ENCODE measurements at regions of chrX and their contacts with region 1.

Region 1: DNA sequence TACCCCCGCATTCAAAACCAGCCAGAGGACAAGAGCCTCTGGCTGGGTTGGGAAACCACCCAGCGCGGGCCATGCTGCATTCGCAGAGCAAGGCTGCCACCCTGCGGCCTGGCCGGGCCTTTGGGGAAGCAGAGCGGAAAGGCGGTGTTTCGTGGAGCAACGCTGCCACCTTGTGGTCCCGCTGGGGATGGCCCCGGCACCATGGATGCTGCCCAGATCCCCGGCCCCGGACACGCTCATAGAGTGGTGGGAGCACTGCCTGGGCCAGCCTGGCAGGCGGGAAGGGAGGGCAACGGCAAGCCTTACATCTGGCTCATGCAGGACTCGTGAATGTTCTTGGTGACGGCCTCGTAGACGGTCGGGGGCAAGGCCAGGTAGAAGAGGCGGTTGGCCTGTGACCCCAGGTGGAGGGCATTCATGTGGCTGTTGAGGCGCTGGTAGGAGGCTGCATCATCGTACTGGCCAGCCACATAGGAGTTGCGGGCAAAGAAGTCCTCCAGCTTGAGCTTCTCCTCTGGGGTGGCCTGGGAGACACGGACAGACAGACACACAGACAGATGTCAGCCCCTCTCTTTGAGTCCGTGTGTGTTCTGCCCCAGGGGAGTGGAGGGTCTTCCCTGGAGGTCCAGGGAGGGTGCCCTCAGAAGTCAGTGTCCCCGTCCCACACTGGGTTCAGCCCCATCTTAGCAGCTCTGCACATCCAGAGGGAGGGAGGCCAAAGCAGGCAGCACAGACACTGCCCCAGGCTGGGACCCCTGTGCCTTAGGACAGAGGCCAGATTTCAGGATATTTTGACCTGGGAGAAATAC is 11.6 kb downstream of the G6PD start:
- DNase-seq: peak; percentile 78 to 93 (median 87)
- ATAC-seq: peak; percentile 100
- H3K4me3 ChIP-seq: no peak overlapping the region
- H3K4me3 Mint-ChIP-seq: no peak overlapping the region
- H3K27ac ChIP-seq: peak overlapping the region; percentile 55
- H3K27ac Mint-ChIP-seq: peak overlapping the region in 5 of 9 donors; percentile 26 to 72 (median 67)
- H3K4me1 ChIP-seq: no peaks in the 10 kb centered on the region
- H3K4me1 Mint-ChIP-seq: peaks cover 0 to 13% (median 6%) of the 10 kb centered on the region in 7 donors
- H3K27me3 ChIP-seq: no peaks in the 10 kb centered on the region
- H3K27me3 Mint-ChIP-seq: no peaks in the 10 kb centered on the region

Region 2: GRCh38 chrX:154013614-154014360 is 521.3 kb before region 1 on chrX:
- CTCF ChIA-PET with region 1: no interaction called
- POLR2A ChIA-PET with region 1: no interaction called
- intact Hi-C with region 1: loop called in 1 of 2 experiments (anchors 2 kb)
- DNase-seq: peak; percentile 24 to 66 (median 47)
- ATAC-seq: peak; percentile 83
- H3K4me3 ChIP-seq: no peak overlapping the region
- H3K4me3 Mint-ChIP-seq: no peak overlapping the region
- H3K27ac ChIP-seq: no peak overlapping the region
- H3K27ac Mint-ChIP-seq: peak overlapping the region in 4 of 9 donors; percentile 12 to 84 (median 68)
- H3K4me1 ChIP-seq: no peaks in the 10 kb centered on the region
- H3K4me1 Mint-ChIP-seq: peaks cover 0 to 17% (median 8%) of the 10 kb centered on the region in 7 donors
- H3K27me3 ChIP-seq: no peaks in the 10 kb centered on the region
- H3K27me3 Mint-ChIP-seq: no peaks in the 10 kb centered on the region

Region 3: GRCh38 chrX:154317391-154317995 is 217.6 kb before region 1 on chrX:
- CTCF ChIA-PET with region 1: interaction called, 4 read pairs
- POLR2A ChIA-PET with region 1: no interaction called
- intact Hi-C with region 1: loop called in 1 of 2 experiments (anchors 1 kb)
- DNase-seq: peak in 3 of 9 donors; percentile 37 to 39 (median 37)
- ATAC-seq: peak; percentile 37
- H3K4me3 ChIP-seq: no peak overlapping the region
- H3K4me3 Mint-ChIP-seq: peak overlapping the region in 8 of 10 donors; percentile 19 to 57 (median 48)
- H3K27ac ChIP-seq: no peak overlapping the region
- H3K27ac Mint-ChIP-seq: peak overlapping the region in 2 of 9 donors; percentile 64 to 91
- H3K4me1 ChIP-seq: peaks cover 13 to 17% of the 10 kb centered on the region in 2 donors
- H3K4me1 Mint-ChIP-seq: peaks cover 14 to 41% (median 39%) of the 10 kb centered on the region in 7 donors
- H3K27me3 ChIP-seq: no peaks in the 10 kb centered on the region
- H3K27me3 Mint-ChIP-seq: no peaks in the 10 kb centered on the region

Region 4: DNA sequence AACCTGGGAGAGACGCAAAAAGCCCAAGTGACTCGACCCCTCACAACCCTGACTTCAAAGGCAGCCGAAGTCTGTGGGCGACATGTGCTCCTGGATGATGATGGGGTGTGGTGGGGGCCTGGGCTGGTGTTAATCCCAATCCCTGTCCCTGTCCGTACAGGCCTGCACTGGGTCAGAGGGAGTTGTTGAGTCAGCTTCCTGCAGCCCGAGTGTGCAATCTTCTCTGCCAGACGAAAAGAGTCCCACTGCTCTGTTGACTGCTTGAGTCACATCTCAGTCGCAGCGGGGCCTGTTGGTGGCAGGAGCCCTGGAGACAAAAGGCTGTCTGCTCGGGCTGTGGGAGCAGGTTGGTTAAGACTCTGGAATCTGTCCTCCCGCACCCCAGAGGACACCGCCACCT is 29.3 kb before region 1 on chrX:
- CTCF ChIA-PET with region 1: no interaction called
- POLR2A ChIA-PET with region 1: no interaction called
- intact Hi-C with region 1: no loop called
- DNase-seq: no peak
- ATAC-seq: no peak
- H3K4me3 ChIP-seq: no peak overlapping the region
- H3K4me3 Mint-ChIP-seq: no peak overlapping the region
- H3K27ac ChIP-seq: no peak overlapping the region
- H3K27ac Mint-ChIP-seq: no peak overlapping the region
- H3K4me1 ChIP-seq: no peaks in the 10 kb centered on the region
- H3K4me1 Mint-ChIP-seq: peaks cover under 1 to 5% (median 2%) of the 10 kb centered on the region in 7 donors
- H3K27me3 ChIP-seq: no peaks in the 10 kb centered on the region
- H3K27me3 Mint-ChIP-seq: no peaks in the 10 kb centered on the region

Region 5: DNA sequence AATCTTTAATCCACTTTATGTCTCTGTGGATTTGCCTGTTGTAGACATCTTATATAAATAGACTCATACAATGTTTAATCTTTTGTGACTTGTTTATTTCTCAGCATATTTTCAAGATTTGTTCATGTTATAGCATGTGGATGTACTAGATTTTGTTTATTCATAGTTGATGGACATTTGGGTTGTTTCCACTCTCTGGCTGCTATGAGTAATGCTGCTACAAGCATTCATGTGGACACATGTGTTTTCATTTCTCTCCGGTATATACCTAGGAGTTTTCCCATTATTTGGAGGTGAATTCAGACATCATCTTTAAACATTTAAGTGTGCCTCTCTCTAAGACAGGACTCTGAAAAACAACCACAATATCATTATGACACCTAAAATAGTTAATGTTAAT is 14.7 kb after region 1 on chrX:
- CTCF ChIA-PET with region 1: no interaction called
- POLR2A ChIA-PET with region 1: no interaction called
- intact Hi-C with region 1: no loop called
- DNase-seq: no peak
- ATAC-seq: no peak
- H3K4me3 ChIP-seq: no peak overlapping the region
- H3K4me3 Mint-ChIP-seq: peak overlapping the region; percentile 9 to 71 (median 54)
- H3K27ac ChIP-seq: no peak overlapping the region
- H3K27ac Mint-ChIP-seq: peak overlapping the region in 4 of 9 donors; percentile 13 to 67 (median 46)
- H3K4me1 ChIP-seq: peaks cover 9 to 34% of the 10 kb centered on the region in 2 donors
- H3K4me1 Mint-ChIP-seq: peaks cover 22 to 55% (median 37%) of the 10 kb centered on the region in 7 donors
- H3K27me3 ChIP-seq: no peaks in the 10 kb centered on the region
- H3K27me3 Mint-ChIP-seq: no peaks in the 10 kb centered on the region

Region 6: DNA sequence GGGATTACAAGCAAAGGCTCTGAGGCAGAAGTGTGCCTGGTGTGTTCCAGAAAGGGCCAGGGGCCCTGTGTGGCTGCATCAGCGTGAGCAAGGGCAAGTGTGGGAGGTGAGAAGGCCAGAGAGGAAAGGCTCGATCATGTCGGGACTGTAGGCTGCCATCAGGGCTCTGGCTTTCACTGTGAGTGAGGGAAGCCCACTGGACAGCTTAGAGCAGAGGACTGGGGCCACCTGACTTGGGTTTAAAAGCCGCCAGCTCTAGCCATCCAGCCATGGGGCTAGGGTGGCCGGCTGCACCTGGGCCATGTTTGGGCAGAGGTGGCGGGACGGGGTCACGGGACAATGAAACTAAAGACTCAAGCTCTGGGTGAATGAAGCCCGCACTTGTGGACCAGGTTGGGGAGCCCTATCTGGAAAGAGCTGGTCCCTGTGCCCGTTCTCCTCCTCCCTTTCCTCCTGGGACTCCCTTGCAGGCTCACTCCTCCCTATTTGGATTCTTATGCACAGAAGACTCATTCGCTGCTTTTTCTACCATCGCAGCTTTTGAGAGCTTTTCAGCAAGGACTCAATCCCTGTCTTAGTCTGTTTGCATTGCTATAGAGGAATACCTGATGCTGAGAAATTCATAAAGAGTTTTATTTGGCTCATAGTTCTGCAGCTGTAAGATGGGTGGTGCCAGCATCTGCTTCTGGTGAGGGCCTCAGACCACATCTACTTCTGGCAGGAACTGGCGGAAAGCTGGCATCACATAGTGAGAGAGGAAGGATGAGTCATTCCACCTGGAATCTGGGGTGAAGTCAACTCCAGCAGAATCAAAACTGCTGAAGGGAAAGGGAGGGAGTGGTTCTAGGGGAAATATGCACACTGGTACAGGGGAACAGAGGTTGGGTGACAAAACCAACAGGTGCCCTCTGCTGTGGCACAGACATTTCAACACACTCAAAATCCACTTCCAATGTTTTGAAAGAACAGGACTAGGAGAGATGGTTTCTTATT is 68.7 kb after region 1 on chrX:
- CTCF ChIA-PET with region 1: no interaction called
- POLR2A ChIA-PET with region 1: no interaction called
- intact Hi-C with region 1: no loop called
- DNase-seq: no peak
- ATAC-seq: no peak
- H3K4me3 ChIP-seq: no peak overlapping the region
- H3K4me3 Mint-ChIP-seq: no peak overlapping the region
- H3K27ac ChIP-seq: no peak overlapping the region
- H3K27ac Mint-ChIP-seq: peak overlapping the region in 1 of 9 donors; percentile 5
- H3K4me1 ChIP-seq: no peaks in the 10 kb centered on the region
- H3K4me1 Mint-ChIP-seq: peaks cover 0 to 14% (median 4%) of the 10 kb centered on the region in 7 donors
- H3K27me3 ChIP-seq: no peaks in the 10 kb centered on the region
- H3K27me3 Mint-ChIP-seq: no peaks in the 10 kb centered on the region

Region 7: DNA sequence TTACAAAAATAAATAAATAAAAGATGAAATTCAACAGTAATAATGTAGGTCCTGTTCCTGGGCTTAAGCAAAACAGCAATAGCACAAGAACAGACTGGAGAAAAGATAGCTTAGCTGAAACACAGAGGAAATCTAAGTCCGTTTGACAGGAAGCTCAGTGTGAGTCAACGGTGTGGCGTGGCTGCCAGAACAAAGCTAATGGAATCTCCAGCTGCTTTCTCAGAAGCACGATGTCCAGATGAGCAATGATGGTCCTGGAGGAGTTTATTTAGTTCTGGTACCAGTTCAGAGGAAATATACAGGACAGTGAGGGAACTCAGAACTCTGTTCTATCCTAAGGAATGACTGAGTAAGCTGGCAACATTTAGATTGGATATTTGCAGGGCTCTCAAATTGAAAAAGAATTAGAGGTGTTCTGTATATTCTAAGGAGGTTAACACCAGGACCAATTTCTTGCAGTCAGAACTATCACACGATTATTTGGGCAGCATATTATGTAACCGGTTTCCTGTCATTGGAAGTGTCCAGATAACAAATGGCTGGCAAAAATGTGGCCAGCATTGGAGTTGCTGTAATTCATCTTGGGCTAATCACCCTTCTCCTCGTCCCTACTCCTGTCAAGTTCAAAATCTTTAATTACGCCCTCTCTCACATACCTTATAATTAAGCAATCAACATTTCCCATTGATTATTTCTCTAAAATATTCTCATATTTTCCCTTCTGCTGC is 203.1 kb after region 1 on chrX:
- CTCF ChIA-PET with region 1: no interaction called
- POLR2A ChIA-PET with region 1: no interaction called
- intact Hi-C with region 1: no loop called
- DNase-seq: no peak
- ATAC-seq: peak; percentile 52
- H3K4me3 ChIP-seq: peak overlapping the region; percentile 32
- H3K4me3 Mint-ChIP-seq: peak overlapping the region in 8 of 10 donors; percentile 26 to 67 (median 38)
- H3K27ac ChIP-seq: no peak overlapping the region
- H3K27ac Mint-ChIP-seq: peak overlapping the region in 5 of 9 donors; percentile 38 to 77 (median 61)
- H3K4me1 ChIP-seq: peaks cover 29 to 70% of the 10 kb centered on the region in 2 donors
- H3K4me1 Mint-ChIP-seq: peaks cover 28 to 76% (median 55%) of the 10 kb centered on the region in 7 donors
- H3K27me3 ChIP-seq: no peaks in the 10 kb centered on the region
- H3K27me3 Mint-ChIP-seq: no peaks in the 10 kb centered on the region

Measured in naive thymus-derived CD4-positive, alpha-beta T cell (primary cell).